ENCODE measurements at regions of chr12 and their contacts with region 1.

Region 1: GRCh38 chr12:89352492-89353187 is at the start of gene DUSP6:
- DNase-seq: peak; percentile 97
- H3K4me3 Mint-ChIP-seq: peak within 1 kb of the TSS; percentile 92
- H3K27ac Mint-ChIP-seq: peak within 1 kb of the TSS; percentile 96
- H3K4me1 Mint-ChIP-seq: peaks cover 36% of the 10 kb centered on the region
- H3K27me3 Mint-ChIP-seq: peaks cover 2% of the 10 kb centered on the region
- total RNA-seq, gene DUSP6: 86.7 to 87.9 TPM

Region 2: GRCh38 chr12:88299567-88300101 is 1053.0 kb before region 1 on chr12:
- CTCF ChIA-PET with region 1: no interaction called
- POLR2A ChIA-PET with region 1: no interaction called
- intact Hi-C with region 1: loop called (anchors 5 kb)
- DNase-seq: peak; percentile 75
- H3K4me3 Mint-ChIP-seq: no peak overlapping the region
- H3K27ac Mint-ChIP-seq: peak overlapping the region; percentile 72
- H3K4me1 Mint-ChIP-seq: peaks cover 27% of the 10 kb centered on the region
- H3K27me3 Mint-ChIP-seq: no peaks in the 10 kb centered on the region

Region 3: DNA sequence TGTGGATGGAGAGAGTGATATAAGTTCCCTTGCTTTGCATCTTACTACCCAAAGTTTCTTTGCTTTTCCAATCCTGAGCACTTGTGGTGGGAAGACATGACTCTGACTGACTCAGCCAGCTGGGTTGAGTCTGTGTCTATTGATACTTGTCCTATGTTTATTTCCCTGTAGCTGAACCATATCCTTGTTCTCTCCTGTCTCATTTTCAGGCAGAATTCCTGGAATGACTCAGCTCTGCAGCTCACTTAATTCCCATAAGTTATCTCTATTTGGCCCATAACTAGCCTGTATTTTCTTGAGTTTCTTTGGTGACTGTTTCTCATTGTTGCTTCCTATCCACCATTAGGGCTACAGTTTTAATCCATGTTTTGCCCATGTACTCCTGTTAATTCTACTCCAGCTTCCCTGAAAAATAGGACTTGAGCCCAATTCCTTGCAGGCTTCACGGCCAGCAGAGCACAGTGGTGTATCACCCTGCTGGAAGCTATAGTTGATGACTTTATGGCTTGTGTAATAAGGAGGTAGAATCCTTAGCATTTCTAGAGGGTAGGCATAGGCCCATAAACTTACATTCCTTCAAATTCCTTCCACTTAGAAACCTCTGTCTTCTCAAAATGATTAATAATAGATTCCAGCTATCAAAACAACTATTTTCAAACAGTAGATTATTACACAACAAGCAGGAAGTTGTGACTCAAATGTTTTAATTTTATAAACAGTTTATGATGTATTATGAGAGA is 1027.4 kb before region 1 on chr12:
- CTCF ChIA-PET with region 1: no interaction called
- POLR2A ChIA-PET with region 1: no interaction called
- intact Hi-C with region 1: no loop called
- DNase-seq: no peak
- H3K4me3 Mint-ChIP-seq: no peak overlapping the region
- H3K27ac Mint-ChIP-seq: no peak overlapping the region
- H3K4me1 Mint-ChIP-seq: no peaks in the 10 kb centered on the region
- H3K27me3 Mint-ChIP-seq: no peaks in the 10 kb centered on the region

Region 4: DNA sequence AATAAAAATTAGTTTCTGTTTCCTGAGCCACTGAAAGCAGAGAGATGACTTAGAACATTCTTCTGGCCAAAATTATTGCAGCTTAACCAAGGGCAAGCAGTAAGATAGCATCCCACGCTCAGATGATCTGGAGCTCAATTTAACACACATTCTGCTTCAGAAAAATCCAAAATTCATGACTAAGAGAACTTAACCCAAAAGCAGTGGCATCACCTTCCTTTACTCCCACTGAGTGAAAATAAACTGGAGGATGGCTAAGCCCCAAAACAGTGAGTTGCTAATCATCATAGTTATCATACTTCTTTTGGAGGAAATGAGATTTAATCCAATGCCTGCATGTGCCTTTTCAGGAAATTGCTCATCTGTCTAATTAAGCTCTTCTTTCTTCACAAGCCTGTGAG is 195.8 kb before region 1 on chr12:
- CTCF ChIA-PET with region 1: interaction called, 3 read pairs
- POLR2A ChIA-PET with region 1: interaction called, 13 read pairs
- intact Hi-C with region 1: loop called (anchors 1 kb)
- DNase-seq: no peak
- H3K4me3 Mint-ChIP-seq: no peak overlapping the region
- H3K27ac Mint-ChIP-seq: peak overlapping the region; percentile 28
- H3K4me1 Mint-ChIP-seq: peaks cover 24% of the 10 kb centered on the region
- H3K27me3 Mint-ChIP-seq: no peaks in the 10 kb centered on the region

Region 5: DNA sequence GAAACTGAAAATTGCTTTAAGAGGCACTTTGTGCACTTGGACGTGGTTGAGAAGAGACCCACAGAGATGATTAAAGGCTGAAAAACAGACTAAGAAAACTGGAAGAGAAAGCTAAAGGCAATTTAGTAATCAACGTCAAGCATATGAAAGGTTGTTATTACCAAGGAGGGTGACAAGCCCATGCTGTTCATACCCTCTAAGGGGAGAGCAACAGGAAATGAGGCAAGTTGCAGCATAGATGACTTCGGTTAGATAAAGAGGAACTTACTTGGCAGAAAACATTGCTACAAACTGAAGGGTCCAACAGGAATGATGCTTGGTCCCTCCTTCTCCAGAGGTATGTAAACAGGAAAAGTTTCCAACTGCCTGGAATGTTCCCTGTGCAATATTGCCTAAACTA is 108.1 kb before region 1 on chr12:
- CTCF ChIA-PET with region 1: interaction called, 15 read pairs
- POLR2A ChIA-PET with region 1: interaction called, 59 read pairs
- intact Hi-C with region 1: loop called (anchors 1 kb)
- DNase-seq: peak; percentile 40
- H3K4me3 Mint-ChIP-seq: peak overlapping the region; percentile 25
- H3K27ac Mint-ChIP-seq: peak overlapping the region; percentile 86
- H3K4me1 Mint-ChIP-seq: peaks cover 39% of the 10 kb centered on the region
- H3K27me3 Mint-ChIP-seq: no peaks in the 10 kb centered on the region

Region 6: DNA sequence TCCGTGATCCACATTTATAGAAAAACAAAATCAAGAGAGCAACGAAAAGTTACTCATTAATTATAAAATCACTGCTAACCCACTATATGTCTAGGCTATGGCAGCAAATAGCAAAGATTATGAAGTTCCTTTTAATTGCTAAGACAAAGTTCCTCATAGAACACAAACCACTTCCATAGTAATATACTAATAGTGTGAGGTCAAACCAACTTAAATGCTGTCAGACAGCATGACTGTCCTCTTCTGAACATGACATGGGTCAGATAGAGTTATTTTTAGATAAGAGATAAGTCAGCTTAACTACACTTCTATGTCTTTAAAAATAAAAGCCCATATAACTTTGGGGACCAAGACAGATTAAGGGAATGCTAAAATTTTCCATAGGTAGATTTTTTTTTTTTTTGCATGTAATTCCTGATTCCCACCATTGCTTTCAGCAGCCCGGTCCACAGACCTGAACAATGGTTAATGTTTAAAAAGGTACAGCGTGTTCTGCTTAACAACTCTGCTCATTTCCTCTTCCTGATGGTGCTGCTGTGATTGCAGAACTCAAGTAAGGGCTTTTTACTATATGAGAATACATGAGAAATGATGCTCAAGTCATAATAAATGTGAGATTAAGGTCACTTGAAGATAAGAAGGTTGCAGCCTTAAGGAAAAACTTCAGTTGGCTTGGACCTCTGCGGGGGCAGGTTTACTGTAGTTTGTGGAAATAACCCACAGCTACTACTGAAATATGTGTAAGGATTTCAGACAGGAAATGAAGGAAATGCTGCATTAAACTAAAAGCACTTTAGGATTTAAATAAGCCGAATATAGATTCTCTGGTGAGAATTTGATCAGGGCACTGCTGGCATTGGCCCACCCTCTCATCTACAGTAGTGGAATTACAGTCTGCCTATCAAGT is 37.4 kb after region 1 on chr12:
- CTCF ChIA-PET with region 1: no interaction called
- POLR2A ChIA-PET with region 1: interaction called, 3 read pairs
- intact Hi-C with region 1: loop called (anchors 1 kb)
- DNase-seq: peak; percentile 64
- H3K4me3 Mint-ChIP-seq: no peak overlapping the region
- H3K27ac Mint-ChIP-seq: no peak overlapping the region
- H3K4me1 Mint-ChIP-seq: peaks cover 20% of the 10 kb centered on the region
- H3K27me3 Mint-ChIP-seq: no peaks in the 10 kb centered on the region

Region 7: GRCh38 chr12:89494411-89495231 is 142.0 kb after region 1 on chr12:
- CTCF ChIA-PET with region 1: interaction called, 4 read pairs
- POLR2A ChIA-PET with region 1: interaction called, 4 read pairs
- intact Hi-C with region 1: loop called (anchors 1 kb)
- DNase-seq: peak; percentile 71
- H3K4me3 Mint-ChIP-seq: peak overlapping the region; percentile 36
- H3K27ac Mint-ChIP-seq: peak overlapping the region; percentile 99
- H3K4me1 Mint-ChIP-seq: peaks cover 30% of the 10 kb centered on the region
- H3K27me3 Mint-ChIP-seq: no peaks in the 10 kb centered on the region

Region 8: GRCh38 chr12:90543374-90543773 is 1190.7 kb after region 1 on chr12:
- CTCF ChIA-PET with region 1: no interaction called
- POLR2A ChIA-PET with region 1: no interaction called
- intact Hi-C with region 1: no loop called
- DNase-seq: no peak
- H3K4me3 Mint-ChIP-seq: no peak overlapping the region
- H3K27ac Mint-ChIP-seq: no peak overlapping the region
- H3K4me1 Mint-ChIP-seq: no peaks in the 10 kb centered on the region
- H3K27me3 Mint-ChIP-seq: no peaks in the 10 kb centered on the region

Measured in activated CD4-positive, alpha-beta memory T cell treated with anti-CD3 and anti-CD28 coated beads for 36 hours (primary cell).